HepG2 (cell line): ENCODE measurements at regions of chr20 and their contacts with region 1.

Region 1: GRCh38 chr20:35284267-35284991 is at the start of gene EIF6:
- DNase-seq: peak; percentile 99
- ATAC-seq: peak; percentile 76
- H3K4me3 ChIP-seq: peak within 1 kb of the TSS; percentile 80 to 98 (median 81)
- H3K27ac ChIP-seq: peak within 1 kb of the TSS; percentile 95
- H3K4me1 ChIP-seq: peaks cover 74% of the 10 kb centered on the region
- H3K27me3 ChIP-seq: peaks cover 0 to 2% of the 10 kb centered on the region in 2 experiments; a peak in 2 of 5 replicates
- CTCF ChIP-seq: peak; percentile 19; the same call in 1 of the 2 replicates
- EP300 ChIP-seq: peak; percentile 43 to 59; a peak in 3 of 4 replicates
- POLR2A ChIP-seq: peak; percentile 94 to 96
- RAD21 ChIP-seq: peak; percentile 44
- total RNA-seq, gene EIF6: 462 and 603 TPM in 2 replicates

Region 2: GRCh38 chr20:35297155-35297554 is 12.7 kb after region 1 on chr20:
- CTCF ChIA-PET with region 1: no interaction called
- POLR2A ChIA-PET with region 1: interaction called, 24 read pairs
- in situ Hi-C with region 1: no loop called
- intact Hi-C with region 1: no loop called
- DNase-seq: no peak
- ATAC-seq: peak; percentile 68
- H3K4me3 ChIP-seq: 0 out of 6 replicates have a peak overlapping the region, but pooled peaks of 1 of the 3 experiments have one; percentile 8
- H3K27ac ChIP-seq: no peak overlapping the region
- H3K4me1 ChIP-seq: peaks cover 45% of the 10 kb centered on the region
- H3K27me3 ChIP-seq: peaks cover 5 to 39% of the 10 kb centered on the region in 2 experiments
- CTCF ChIP-seq: 0 out of 2 replicates have a peak, but pooled peaks have one; percentile 8
- EP300 ChIP-seq: no peak
- POLR2A ChIP-seq: no peak
- RAD21 ChIP-seq: no peak

Region 3: GRCh38 chr20:35318502-35319157 is 34.2 kb after region 1 on chr20:
- CTCF ChIA-PET with region 1: no interaction called
- POLR2A ChIA-PET with region 1: interaction called, 17 read pairs
- in situ Hi-C with region 1: no loop called
- intact Hi-C with region 1: no loop called
- DNase-seq: peak; percentile 71
- ATAC-seq: no peak
- H3K4me3 ChIP-seq: no peak overlapping the region
- H3K27ac ChIP-seq: no peak overlapping the region
- H3K4me1 ChIP-seq: peaks cover 25% of the 10 kb centered on the region
- H3K27me3 ChIP-seq: no peaks in the 10 kb centered on the region
- CTCF ChIP-seq: no peak
- EP300 ChIP-seq: no peak
- POLR2A ChIP-seq: no peak
- RAD21 ChIP-seq: no peak